B cell (primary cell): ENCODE measurements at regions of chr9 and their contacts with region 1.

Region 1: GRCh38 chr9:121369595-121370265 is at the start of gene STOM:
- DNase-seq: no peak
- ATAC-seq: peak; percentile 56
- H3K4me3 ChIP-seq: peak within 1 kb of the TSS; percentile 58 to 93 (median 71)
- H3K4me3 Mint-ChIP-seq: peak within 1 kb of the TSS; percentile 91
- H3K27ac ChIP-seq: peak within 1 kb of the TSS; percentile 68 to 75
- H3K27ac Mint-ChIP-seq: peak within 1 kb of the TSS; percentile 91
- H3K4me1 ChIP-seq: peaks cover 19 to 20% of the 10 kb centered on the region in 2 donors
- H3K4me1 Mint-ChIP-seq: peaks cover 29% of the 10 kb centered on the region
- H3K27me3 ChIP-seq: no peaks in the 10 kb centered on the region
- H3K27me3 Mint-ChIP-seq: no peaks in the 10 kb centered on the region
- CTCF ChIP-seq: no peak
- total RNA-seq, gene STOM: 6.1 and 6.3 TPM in 2 replicates

Region 2: DNA sequence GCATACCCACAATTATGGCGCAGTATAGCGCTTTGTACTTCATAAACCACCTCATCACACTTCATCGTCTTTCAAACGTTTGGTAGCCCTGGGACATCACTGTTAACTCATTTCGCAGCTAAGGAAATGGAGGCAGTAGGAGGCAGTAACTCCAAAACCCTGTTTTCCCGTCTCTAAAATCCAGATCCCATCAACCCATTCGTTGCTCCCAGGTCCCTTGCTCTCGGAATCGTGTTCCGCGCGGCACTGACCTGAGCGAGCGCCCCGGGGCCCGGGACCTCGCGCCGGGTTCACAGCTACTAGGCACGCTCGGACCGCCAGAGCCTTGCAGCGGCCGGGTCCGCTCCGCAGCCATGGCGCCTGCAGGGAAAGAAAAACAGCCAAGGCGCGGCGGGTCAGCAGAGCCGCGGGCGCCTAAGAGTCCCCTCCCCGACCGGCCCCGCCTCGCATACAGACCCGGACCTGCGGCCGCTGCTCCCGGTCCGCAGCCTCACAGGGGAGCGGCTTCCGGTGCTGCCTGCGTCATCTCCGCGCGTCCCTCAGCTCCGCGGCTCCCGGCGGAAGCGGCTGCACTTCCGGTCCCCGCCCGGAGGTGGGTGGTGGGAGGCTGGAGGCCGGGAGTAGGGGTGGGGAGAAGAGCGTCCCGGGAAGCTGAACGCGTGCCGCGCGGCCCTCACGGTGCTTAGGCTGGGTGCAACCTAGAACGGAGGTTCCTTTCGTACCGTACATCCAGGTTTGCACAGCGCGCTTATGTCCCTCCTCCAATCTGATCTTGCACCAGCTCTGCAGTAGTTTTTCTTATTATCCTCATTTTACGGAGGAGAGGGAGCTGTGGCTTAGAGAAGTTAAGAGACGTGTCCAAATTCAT is 576.6 kb before region 1 on chr9 and contains the start of gene FBXW2:
- CTCF ChIA-PET with region 1: no interaction called
- POLR2A ChIA-PET with region 1: no interaction called
- intact Hi-C with region 1: loop called (anchors 5 kb)
- DNase-seq: peak; percentile 88
- ATAC-seq: peak; percentile 94
- H3K4me3 ChIP-seq: peak within 1 kb of the TSS; percentile 73 to 96 (median 89)
- H3K4me3 Mint-ChIP-seq: peak within 1 kb of the TSS; percentile 92
- H3K27ac ChIP-seq: peak within 1 kb of the TSS; percentile 77 to 87
- H3K27ac Mint-ChIP-seq: peak within 1 kb of the TSS; percentile 92
- H3K4me1 ChIP-seq: peaks cover 18 to 25% of the 10 kb centered on the region in 2 donors
- H3K4me1 Mint-ChIP-seq: peaks cover 38% of the 10 kb centered on the region
- H3K27me3 ChIP-seq: no peaks in the 10 kb centered on the region
- H3K27me3 Mint-ChIP-seq: no peaks in the 10 kb centered on the region
- CTCF ChIP-seq: no peak
- total RNA-seq, gene FBXW2: 70.6 and 73.3 TPM in 2 replicates

Region 3: GRCh38 chr9:121267689-121268597 is 101.8 kb before region 1 on chr9 and contains the start of gene GSN:
- CTCF ChIA-PET with region 1: no interaction called
- POLR2A ChIA-PET with region 1: no interaction called
- intact Hi-C with region 1: loop called (anchors 1 kb)
- DNase-seq: peak; percentile 61
- ATAC-seq: peak; percentile 91
- H3K4me3 ChIP-seq: peak within 1 kb of the TSS; percentile 62 to 78 (median 74)
- H3K4me3 Mint-ChIP-seq: peak within 1 kb of the TSS; percentile 91
- H3K27ac ChIP-seq: no peak within 1 kb of the TSS
- H3K27ac Mint-ChIP-seq: peak within 1 kb of the TSS; percentile 68
- H3K4me1 ChIP-seq: peaks cover 13 to 41% of the 10 kb centered on the region in 2 donors
- H3K4me1 Mint-ChIP-seq: peaks cover 32% of the 10 kb centered on the region
- H3K27me3 ChIP-seq: no peaks in the 10 kb centered on the region
- H3K27me3 Mint-ChIP-seq: no peaks in the 10 kb centered on the region
- CTCF ChIP-seq: no peak
- total RNA-seq, gene GSN: 45.4 and 45.9 TPM in 2 replicates

Region 4: DNA sequence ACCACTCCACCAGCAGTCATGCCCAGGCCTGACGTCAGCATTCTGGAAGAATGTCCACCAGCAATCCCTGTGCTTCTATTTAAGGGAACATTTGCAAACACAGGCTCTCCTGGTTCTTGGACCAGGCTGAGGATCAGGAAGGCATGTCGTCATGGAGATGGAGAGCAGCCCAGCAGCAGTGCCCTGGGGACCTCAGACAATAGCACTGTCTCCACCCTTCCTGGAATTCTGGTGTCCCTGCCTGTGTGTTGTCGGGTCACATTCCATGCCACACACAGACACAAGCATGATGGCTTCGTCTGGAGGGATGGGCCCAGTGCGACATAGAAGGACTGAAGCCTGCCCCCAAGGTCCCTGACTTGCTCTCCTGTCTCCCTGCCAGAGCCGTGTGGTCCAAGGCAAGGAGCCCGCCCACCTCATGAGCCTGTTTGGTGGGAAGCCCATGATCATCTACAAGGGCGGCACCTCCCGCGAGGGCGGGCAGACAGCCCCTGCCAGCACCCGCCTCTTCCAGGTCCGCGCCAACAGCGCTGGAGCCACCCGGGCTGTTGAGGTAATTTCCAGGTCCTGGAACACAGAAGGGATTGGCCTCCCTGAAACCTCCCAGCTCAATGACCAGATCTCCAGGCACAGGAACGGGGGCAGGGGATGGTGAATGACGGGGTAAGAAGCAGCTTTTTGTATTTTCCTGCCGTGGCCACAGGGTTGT is 43.4 kb before region 1 on chr9:
- CTCF ChIA-PET with region 1: interaction called, 102 read pairs
- POLR2A ChIA-PET with region 1: no interaction called
- intact Hi-C with region 1: loop called (anchors 5 kb)
- DNase-seq: no peak
- ATAC-seq: no peak
- H3K4me3 ChIP-seq: no peak overlapping the region
- H3K4me3 Mint-ChIP-seq: no peak overlapping the region
- H3K27ac ChIP-seq: no peak overlapping the region
- H3K27ac Mint-ChIP-seq: no peak overlapping the region
- H3K4me1 ChIP-seq: no peaks in the 10 kb centered on the region
- H3K4me1 Mint-ChIP-seq: no peaks in the 10 kb centered on the region
- H3K27me3 ChIP-seq: no peaks in the 10 kb centered on the region
- H3K27me3 Mint-ChIP-seq: no peaks in the 10 kb centered on the region
- CTCF ChIP-seq: no peak

Region 5: GRCh38 chr9:121336665-121337064 is 33.1 kb before region 1 on chr9:
- CTCF ChIA-PET with region 1: no interaction called
- POLR2A ChIA-PET with region 1: no interaction called
- intact Hi-C with region 1: no loop called
- DNase-seq: no peak
- ATAC-seq: no peak
- H3K4me3 ChIP-seq: no peak overlapping the region
- H3K4me3 Mint-ChIP-seq: no peak overlapping the region
- H3K27ac ChIP-seq: no peak overlapping the region
- H3K27ac Mint-ChIP-seq: no peak overlapping the region
- H3K4me1 ChIP-seq: peaks cover 3 to 9% of the 10 kb centered on the region in 2 donors
- H3K4me1 Mint-ChIP-seq: peaks cover 9% of the 10 kb centered on the region
- H3K27me3 ChIP-seq: no peaks in the 10 kb centered on the region
- H3K27me3 Mint-ChIP-seq: no peaks in the 10 kb centered on the region
- CTCF ChIP-seq: no peak